ENCODE measurements at regions of chr16 and their contacts with region 1.

Region 1: DNA sequence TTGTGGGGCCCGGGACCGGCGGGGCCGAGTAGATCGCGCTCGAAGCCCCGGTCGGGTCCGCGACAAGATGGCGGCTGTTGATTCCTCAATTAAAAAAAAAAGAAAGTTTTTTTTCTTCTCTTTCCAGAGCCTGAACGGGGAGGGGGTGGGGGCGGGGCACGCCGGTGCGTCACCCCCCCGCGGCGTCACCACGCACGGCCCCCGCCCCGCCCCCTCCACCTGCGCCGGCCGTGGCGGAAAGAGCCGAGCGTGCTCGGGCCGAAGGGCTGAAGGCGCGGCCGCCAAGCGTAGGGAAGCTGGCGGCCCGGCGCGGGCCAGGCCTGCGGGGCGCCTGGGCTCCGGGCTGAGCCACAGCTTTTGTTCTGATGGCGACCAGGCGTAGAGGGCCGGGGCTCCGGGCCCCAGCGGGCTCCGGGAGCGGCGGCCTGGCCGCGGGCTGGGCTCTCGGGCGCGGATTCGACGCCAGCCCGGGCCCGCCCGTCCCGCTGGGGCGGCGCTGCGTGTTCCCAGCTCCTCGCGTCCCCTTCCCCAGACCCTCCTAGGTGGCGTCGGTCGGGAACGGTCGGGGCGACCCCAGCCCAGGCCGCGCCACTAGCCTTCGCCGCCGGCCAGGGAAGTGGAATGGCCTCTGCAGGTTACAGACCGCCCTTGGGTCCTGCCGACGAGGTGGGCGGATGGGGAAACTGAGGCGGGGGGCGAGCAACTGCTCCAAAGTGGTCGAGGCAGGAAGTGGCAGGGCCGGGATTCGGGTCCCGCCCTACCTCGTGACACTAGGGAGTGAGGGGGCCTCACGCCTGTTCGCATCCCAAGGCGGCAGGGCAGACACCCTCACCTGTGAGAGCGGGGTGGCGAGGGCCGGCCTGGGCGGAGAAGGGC is at the start of gene CREBBP:
- DNase-seq: peak; percentile 79 to 92 (median 89)
- ATAC-seq: peak; percentile 94
- H3K4me3 ChIP-seq: peak within 1 kb of the TSS; percentile 82
- H3K4me3 Mint-ChIP-seq: peak within 1 kb of the TSS; percentile 77 to 100 (median 94)
- H3K27ac ChIP-seq: peak within 1 kb of the TSS; percentile 85
- H3K27ac Mint-ChIP-seq: peak within 1 kb of the TSS; percentile 71 to 96 (median 91)
- H3K4me1 ChIP-seq: peaks cover 23 to 24% of the 10 kb centered on the region in 2 donors
- H3K4me1 Mint-ChIP-seq: peaks cover 32 to 46% (median 39%) of the 10 kb centered on the region in 7 donors
- H3K27me3 ChIP-seq: no peaks in the 10 kb centered on the region
- H3K27me3 Mint-ChIP-seq: peaks cover 0 to 8% (median 6%) of the 10 kb centered on the region in 5 donors
- total RNA-seq, gene CREBBP: 73.6 to 194 (median 137) TPM

Region 2: DNA sequence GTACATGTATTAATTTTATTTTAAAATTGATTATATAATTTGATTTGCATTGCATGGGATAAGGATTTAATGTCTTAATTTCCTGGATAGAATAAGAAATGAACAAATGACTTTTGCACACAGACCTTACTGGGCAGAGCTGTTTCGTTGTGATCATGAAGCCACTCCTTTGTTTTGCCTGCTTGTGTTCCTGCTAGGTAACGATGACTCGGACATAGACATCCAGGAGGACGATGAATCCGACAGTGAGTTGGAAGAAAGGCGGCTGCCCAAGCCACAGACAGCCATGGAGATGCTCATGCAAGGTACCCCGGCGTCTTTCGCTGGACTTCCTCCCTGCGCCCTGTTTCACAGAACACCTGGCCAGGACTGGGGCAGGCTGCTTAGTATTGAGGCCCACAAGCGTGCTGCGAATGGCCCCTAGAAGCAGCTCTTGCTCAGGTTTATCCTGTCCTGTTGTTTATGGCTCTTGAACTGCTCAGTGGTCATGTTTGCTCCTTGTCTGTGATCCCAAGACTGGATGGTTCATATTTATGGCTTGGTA is 350.4 kb before region 1 on chr16:
- CTCF ChIA-PET with region 1: no interaction called
- POLR2A ChIA-PET with region 1: no interaction called
- intact Hi-C with region 1: loop called in 1 of 2 experiments (anchors 1 kb)
- DNase-seq: no peak
- ATAC-seq: no peak
- H3K4me3 ChIP-seq: no peak overlapping the region
- H3K4me3 Mint-ChIP-seq: no peak overlapping the region
- H3K27ac ChIP-seq: no peak overlapping the region
- H3K27ac Mint-ChIP-seq: peak overlapping the region in 2 of 9 donors; percentile 17 to 56
- H3K4me1 ChIP-seq: no peaks in the 10 kb centered on the region
- H3K4me1 Mint-ChIP-seq: peaks cover 12 to 40% (median 32%) of the 10 kb centered on the region in 7 donors
- H3K27me3 ChIP-seq: no peaks in the 10 kb centered on the region
- H3K27me3 Mint-ChIP-seq: no peaks in the 10 kb centered on the region

Region 3: GRCh38 chr16:3717235-3718018 is 163.4 kb before region 1 on chr16 and contains the start of gene TRAP1:
- CTCF ChIA-PET with region 1: interaction called, 3 read pairs
- POLR2A ChIA-PET with region 1: interaction called, 9 read pairs
- intact Hi-C with region 1: loop called in 1 of 2 experiments (anchors 1 kb)
- DNase-seq: peak; percentile 81 to 96 (median 88)
- ATAC-seq: peak; percentile 98
- H3K4me3 ChIP-seq: peak within 1 kb of the TSS; percentile 67
- H3K4me3 Mint-ChIP-seq: peak within 1 kb of the TSS; percentile 81 to 94 (median 89)
- H3K27ac ChIP-seq: peak within 1 kb of the TSS; percentile 94
- H3K27ac Mint-ChIP-seq: peak within 1 kb of the TSS; percentile 67 to 96 (median 92)
- H3K4me1 ChIP-seq: peaks cover 6 to 11% of the 10 kb centered on the region in 2 donors
- H3K4me1 Mint-ChIP-seq: peaks cover 14 to 47% (median 38%) of the 10 kb centered on the region in 7 donors
- H3K27me3 ChIP-seq: no peaks in the 10 kb centered on the region
- H3K27me3 Mint-ChIP-seq: no peaks in the 10 kb centered on the region
- total RNA-seq, gene TRAP1: 96.8 to 138 (median 132) TPM

Region 4: GRCh38 chr16:3793161-3793576 is 87.7 kb before region 1 on chr16:
- CTCF ChIA-PET with region 1: interaction called, 3 read pairs
- POLR2A ChIA-PET with region 1: no interaction called
- intact Hi-C with region 1: loop called (anchors 1 to 5 kb)
- DNase-seq: peak in 2 of 9 donors; percentile 18 to 21
- ATAC-seq: no peak
- H3K4me3 ChIP-seq: no peak overlapping the region
- H3K4me3 Mint-ChIP-seq: peak overlapping the region in 4 of 10 donors; percentile 16 to 50 (median 33)
- H3K27ac ChIP-seq: no peak overlapping the region
- H3K27ac Mint-ChIP-seq: peak overlapping the region in 1 of 9 donors; percentile 21
- H3K4me1 ChIP-seq: peaks cover 43 to 46% of the 10 kb centered on the region in 2 donors
- H3K4me1 Mint-ChIP-seq: peaks cover 54 to 95% (median 81%) of the 10 kb centered on the region in 7 donors
- H3K27me3 ChIP-seq: no peaks in the 10 kb centered on the region
- H3K27me3 Mint-ChIP-seq: peaks cover 0 to 6% (median 0%) of the 10 kb centered on the region in 5 donors

Region 5: GRCh38 chr16:3842994-3843393 is 37.9 kb before region 1 on chr16:
- CTCF ChIA-PET with region 1: no interaction called
- POLR2A ChIA-PET with region 1: no interaction called
- intact Hi-C with region 1: no loop called
- DNase-seq: no peak
- ATAC-seq: no peak
- H3K4me3 ChIP-seq: no peak overlapping the region
- H3K4me3 Mint-ChIP-seq: peak overlapping the region in 1 of 10 donors; percentile 27
- H3K27ac ChIP-seq: no peak overlapping the region
- H3K27ac Mint-ChIP-seq: no peak overlapping the region
- H3K4me1 ChIP-seq: peaks cover 8 to 17% of the 10 kb centered on the region in 2 donors
- H3K4me1 Mint-ChIP-seq: peaks cover 17 to 86% (median 80%) of the 10 kb centered on the region in 7 donors
- H3K27me3 ChIP-seq: no peaks in the 10 kb centered on the region
- H3K27me3 Mint-ChIP-seq: no peaks in the 10 kb centered on the region

Region 6: GRCh38 chr16:3861808-3862451 is 18.9 kb before region 1 on chr16:
- CTCF ChIA-PET with region 1: no interaction called
- POLR2A ChIA-PET with region 1: no interaction called
- intact Hi-C with region 1: no loop called
- DNase-seq: no peak
- ATAC-seq: peak; percentile 61
- H3K4me3 ChIP-seq: no peak overlapping the region
- H3K4me3 Mint-ChIP-seq: peak overlapping the region in 8 of 10 donors; percentile 32 to 68 (median 58)
- H3K27ac ChIP-seq: no peak overlapping the region
- H3K27ac Mint-ChIP-seq: peak overlapping the region in 7 of 9 donors; percentile 16 to 81 (median 41)
- H3K4me1 ChIP-seq: peaks cover 40 to 45% of the 10 kb centered on the region in 2 donors
- H3K4me1 Mint-ChIP-seq: peaks cover 41 to 98% (median 93%) of the 10 kb centered on the region in 7 donors
- H3K27me3 ChIP-seq: no peaks in the 10 kb centered on the region
- H3K27me3 Mint-ChIP-seq: no peaks in the 10 kb centered on the region

Region 7: DNA sequence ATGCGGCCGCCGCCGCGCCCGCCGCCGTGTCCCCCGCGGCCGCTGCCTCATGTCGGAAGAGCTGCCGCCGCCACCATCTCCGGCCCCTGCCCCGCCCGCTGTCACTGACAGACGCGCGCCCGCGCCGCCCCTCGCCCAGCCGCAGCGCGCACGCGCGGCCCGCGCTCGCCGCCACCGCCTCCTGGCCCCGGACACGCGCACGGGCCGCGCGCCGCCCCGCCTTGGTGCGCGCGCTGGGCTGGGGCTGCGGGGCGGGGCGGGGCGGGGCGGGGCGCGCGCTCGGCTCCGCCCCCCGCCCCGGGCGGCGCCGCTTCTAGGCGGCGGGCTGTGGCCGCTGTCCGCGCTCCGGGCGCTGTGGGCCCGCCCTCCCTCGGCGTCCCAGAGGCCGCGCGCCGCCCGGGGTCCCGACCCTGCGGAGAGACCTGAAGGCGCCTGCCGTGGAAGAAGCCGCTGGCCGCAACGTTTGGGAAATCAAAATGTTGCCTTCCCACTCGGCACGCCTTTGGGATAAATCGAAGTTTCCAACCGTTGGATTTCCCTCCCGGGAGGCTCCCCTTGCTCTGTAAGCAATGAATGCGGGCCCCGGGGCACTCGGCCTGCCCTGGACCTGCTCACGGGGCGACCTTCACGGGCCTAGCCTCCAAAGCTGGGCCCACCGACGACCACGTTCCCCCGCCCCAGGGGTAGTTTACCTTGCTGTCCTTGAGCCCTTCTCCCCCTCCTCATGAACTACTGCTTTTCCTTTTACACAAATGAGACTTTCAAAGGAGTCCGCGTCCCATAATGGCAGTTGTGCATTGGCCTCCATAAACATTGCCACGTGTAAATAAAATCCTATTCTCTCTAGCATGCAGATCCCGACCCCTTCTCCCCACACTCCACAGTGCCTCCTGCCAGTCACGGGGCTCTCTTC is 235.7 kb after region 1 on chr16 and contains the start of gene ADCY9:
- CTCF ChIA-PET with region 1: no interaction called
- POLR2A ChIA-PET with region 1: no interaction called
- intact Hi-C with region 1: loop called in 1 of 2 experiments (anchors 1 kb)
- DNase-seq: peak; percentile 67 to 89 (median 78)
- ATAC-seq: peak; percentile 95
- H3K4me3 ChIP-seq: peak within 1 kb of the TSS; percentile 65
- H3K4me3 Mint-ChIP-seq: peak within 1 kb of the TSS; percentile 79 to 94 (median 88)
- H3K27ac ChIP-seq: peak within 1 kb of the TSS; percentile 14
- H3K27ac Mint-ChIP-seq: peak within 1 kb of the TSS in 8 of 9 donors; percentile 25 to 82 (median 70)
- H3K4me1 ChIP-seq: peaks cover 13 to 19% of the 10 kb centered on the region in 2 donors
- H3K4me1 Mint-ChIP-seq: peaks cover 31 to 41% (median 38%) of the 10 kb centered on the region in 7 donors
- H3K27me3 ChIP-seq: no peaks in the 10 kb centered on the region
- H3K27me3 Mint-ChIP-seq: peaks cover 0 to 26% (median 0%) of the 10 kb centered on the region in 5 donors
- total RNA-seq, gene ADCY9: 3.9 to 14.3 (median 5.6) TPM

Region 8: GRCh38 chr16:4402439-4403132 is 521.7 kb after region 1 on chr16:
- CTCF ChIA-PET with region 1: no interaction called
- POLR2A ChIA-PET with region 1: no interaction called
- intact Hi-C with region 1: no loop called
- DNase-seq: peak in 8 of 9 donors; percentile 33 to 76 (median 64)
- ATAC-seq: peak; percentile 61
- H3K4me3 ChIP-seq: no peak overlapping the region
- H3K4me3 Mint-ChIP-seq: peak overlapping the region in 1 of 10 donors; percentile 13
- H3K27ac ChIP-seq: no peak overlapping the region
- H3K27ac Mint-ChIP-seq: peak overlapping the region in 4 of 9 donors; percentile 14 to 66 (median 28)
- H3K4me1 ChIP-seq: no peaks in the 10 kb centered on the region
- H3K4me1 Mint-ChIP-seq: peaks cover 9 to 29% (median 19%) of the 10 kb centered on the region in 7 donors
- H3K27me3 ChIP-seq: no peaks in the 10 kb centered on the region
- H3K27me3 Mint-ChIP-seq: no peaks in the 10 kb centered on the region

Region 9: GRCh38 chr16:4693296-4693955 is 812.6 kb after region 1 on chr16 and contains the start of gene NUDT16L1:
- CTCF ChIA-PET with region 1: no interaction called
- POLR2A ChIA-PET with region 1: no interaction called
- intact Hi-C with region 1: loop called in 1 of 2 experiments (anchors 1 kb)
- DNase-seq: peak; percentile 95 to 99 (median 98)
- ATAC-seq: peak; percentile 97
- H3K4me3 ChIP-seq: peak within 1 kb of the TSS; percentile 93
- H3K4me3 Mint-ChIP-seq: peak within 1 kb of the TSS; percentile 78 to 91 (median 86)
- H3K27ac ChIP-seq: peak within 1 kb of the TSS; percentile 93
- H3K27ac Mint-ChIP-seq: peak within 1 kb of the TSS; percentile 73 to 93 (median 88)
- H3K4me1 ChIP-seq: peaks cover 14% of the 10 kb centered on the region in 2 donors
- H3K4me1 Mint-ChIP-seq: peaks cover 8 to 23% (median 14%) of the 10 kb centered on the region in 7 donors
- H3K27me3 ChIP-seq: no peaks in the 10 kb centered on the region
- H3K27me3 Mint-ChIP-seq: no peaks in the 10 kb centered on the region
- total RNA-seq, gene NUDT16L1: 42.8 to 65.4 (median 53.3) TPM